Activated CD4-positive, alpha-beta memory T cell treated with anti-CD3 and anti-CD28 coated beads for 36 hours (primary cell): ENCODE measurements at regions of chr14 and their contacts with region 1.

Region 1: GRCh38 chr14:106044949-106045600 is 518.7 kb downstream of the TMEM121 start:
- DNase-seq: peak; percentile 92
- H3K4me3 Mint-ChIP-seq: no peak overlapping the region
- H3K27ac Mint-ChIP-seq: peak overlapping the region; percentile 57
- H3K4me1 Mint-ChIP-seq: peaks cover 12% of the 10 kb centered on the region
- H3K27me3 Mint-ChIP-seq: peaks cover 12% of the 10 kb centered on the region

Region 2: DNA sequence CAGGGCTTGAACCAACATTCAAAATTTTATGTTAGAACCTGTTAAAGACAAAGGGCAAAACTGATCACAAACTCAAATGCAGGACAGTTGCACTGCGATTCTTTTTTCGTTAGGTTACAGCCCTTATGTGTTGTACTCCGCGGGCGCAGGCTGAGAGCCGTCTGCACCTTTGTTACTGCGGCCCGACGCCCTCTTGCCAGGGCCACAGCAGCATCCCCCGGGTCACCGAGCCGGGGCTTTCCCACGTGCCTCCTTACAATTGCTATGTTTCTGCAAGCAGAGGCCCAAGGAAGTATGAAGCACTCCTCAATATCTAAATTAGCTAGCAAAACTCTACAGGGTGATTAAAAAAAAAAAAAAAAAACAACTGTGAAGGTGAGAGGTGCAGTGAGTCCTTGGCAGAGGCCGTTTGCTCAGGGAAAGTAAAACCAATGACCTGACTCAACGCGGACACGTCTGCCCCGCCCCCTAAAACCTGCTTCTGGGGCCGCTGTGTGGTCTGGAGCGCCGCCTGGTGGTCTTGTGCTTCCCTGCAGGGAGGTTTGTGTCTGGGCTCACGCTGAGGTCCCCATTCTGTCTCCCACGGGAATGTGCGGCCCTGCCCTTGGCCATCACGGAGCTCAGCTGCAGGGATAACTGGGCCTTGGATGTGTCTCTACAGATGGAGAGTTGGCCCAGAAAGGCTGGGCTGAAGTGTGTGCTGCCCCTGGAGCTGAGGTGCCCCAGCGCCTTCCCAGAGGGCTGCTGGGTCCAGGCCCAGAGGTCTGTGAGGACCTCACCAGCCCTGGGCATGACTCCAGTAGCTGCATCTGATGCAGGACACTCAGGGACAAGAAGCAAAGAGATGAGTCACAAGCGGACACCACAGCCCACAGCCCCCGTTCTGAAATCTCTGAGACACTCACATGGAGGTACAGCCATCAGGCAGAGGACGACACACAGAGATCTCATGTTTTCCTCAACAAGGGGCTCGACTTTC is 100.2 kb before region 1 on chr14:
- CTCF ChIA-PET with region 1: interaction called, 3 read pairs
- POLR2A ChIA-PET with region 1: no interaction called
- intact Hi-C with region 1: loop called (anchors 1 kb)
- DNase-seq: peak; percentile 91
- H3K4me3 Mint-ChIP-seq: no peak overlapping the region
- H3K27ac Mint-ChIP-seq: no peak overlapping the region
- H3K4me1 Mint-ChIP-seq: peaks cover 11% of the 10 kb centered on the region
- H3K27me3 Mint-ChIP-seq: peaks cover 4% of the 10 kb centered on the region

Region 3: GRCh38 chr14:106013879-106014376 is 31.1 kb before region 1 on chr14:
- CTCF ChIA-PET with region 1: interaction called, 18 read pairs
- POLR2A ChIA-PET with region 1: no interaction called
- intact Hi-C with region 1: loop called (anchors 1 kb)
- DNase-seq: peak; percentile 69
- H3K4me3 Mint-ChIP-seq: peak overlapping the region; percentile 72
- H3K27ac Mint-ChIP-seq: peak overlapping the region; percentile 97
- H3K4me1 Mint-ChIP-seq: peaks cover 77% of the 10 kb centered on the region
- H3K27me3 Mint-ChIP-seq: no peaks in the 10 kb centered on the region

Region 4: DNA sequence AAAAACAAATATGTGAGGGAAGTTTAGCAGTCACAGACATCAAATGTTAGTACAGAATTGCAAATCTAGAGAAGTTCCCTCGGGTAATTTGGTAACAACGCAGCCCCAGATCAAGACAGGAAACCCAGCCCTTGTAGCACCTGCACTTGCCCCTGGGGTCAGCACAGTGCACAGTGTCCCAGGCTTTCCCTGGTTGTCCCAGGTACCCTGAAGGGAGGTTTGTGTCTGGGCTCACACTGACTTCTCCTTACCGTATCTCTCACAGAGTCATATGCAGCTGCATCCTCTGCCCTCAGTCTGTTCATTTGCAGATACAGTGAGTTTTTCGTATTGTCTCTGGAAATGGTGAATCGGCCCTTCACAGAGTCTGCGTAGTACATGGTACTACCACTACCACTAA is 10.2 kb after region 1 on chr14:
- CTCF ChIA-PET with region 1: interaction called, 29 read pairs
- POLR2A ChIA-PET with region 1: no interaction called
- intact Hi-C with region 1: no loop called
- DNase-seq: no peak
- H3K4me3 Mint-ChIP-seq: no peak overlapping the region
- H3K27ac Mint-ChIP-seq: no peak overlapping the region
- H3K4me1 Mint-ChIP-seq: peaks cover 33% of the 10 kb centered on the region
- H3K27me3 Mint-ChIP-seq: peaks cover 20% of the 10 kb centered on the region

Region 5: DNA sequence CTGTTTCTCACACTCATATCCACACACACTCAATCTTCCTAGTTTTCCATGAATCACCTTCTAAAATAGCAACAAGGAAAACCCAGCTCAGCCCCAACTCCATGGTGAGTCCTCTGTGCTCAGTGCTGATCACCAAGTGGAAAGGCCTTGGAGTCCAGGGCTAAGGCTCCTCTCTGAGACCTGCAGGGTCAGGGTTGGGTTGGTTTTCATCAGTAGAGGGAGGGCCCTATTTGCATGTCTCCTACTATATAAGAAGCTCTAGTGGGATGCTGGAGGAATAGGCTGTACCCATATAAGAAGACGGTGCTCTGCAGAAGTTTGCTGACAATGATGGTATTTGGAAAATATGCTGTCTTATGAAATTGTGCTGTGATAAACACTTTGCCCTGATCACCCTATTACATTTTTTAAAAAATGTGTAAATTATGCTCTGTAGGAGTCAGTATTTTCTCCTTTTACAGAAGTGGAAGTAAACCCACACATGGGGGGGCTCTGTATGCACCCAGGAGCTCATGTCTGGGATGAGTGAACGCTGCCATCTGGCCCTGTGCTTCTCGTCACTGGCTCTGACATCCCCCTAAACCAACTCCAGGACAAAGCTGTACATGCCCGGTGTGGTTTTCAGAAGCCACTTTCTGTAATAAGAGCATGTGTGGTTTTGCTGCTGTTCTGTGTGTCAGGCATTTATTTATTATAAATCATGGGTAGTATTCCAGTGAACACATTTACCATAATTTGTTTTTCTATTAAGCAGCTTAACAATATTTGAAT is 17.6 kb after region 1 on chr14:
- CTCF ChIA-PET with region 1: interaction called, 29 read pairs
- POLR2A ChIA-PET with region 1: no interaction called
- intact Hi-C with region 1: loop called (anchors 2 kb)
- DNase-seq: no peak
- H3K4me3 Mint-ChIP-seq: no peak overlapping the region
- H3K27ac Mint-ChIP-seq: no peak overlapping the region
- H3K4me1 Mint-ChIP-seq: peaks cover 28% of the 10 kb centered on the region
- H3K27me3 Mint-ChIP-seq: peaks cover 44% of the 10 kb centered on the region

Region 6: GRCh38 chr14:106087837-106088236 is 42.8 kb after region 1 on chr14:
- CTCF ChIA-PET with region 1: no interaction called
- POLR2A ChIA-PET with region 1: no interaction called
- intact Hi-C with region 1: no loop called
- DNase-seq: no peak
- H3K4me3 Mint-ChIP-seq: no peak overlapping the region
- H3K27ac Mint-ChIP-seq: no peak overlapping the region
- H3K4me1 Mint-ChIP-seq: peaks cover 14% of the 10 kb centered on the region
- H3K27me3 Mint-ChIP-seq: peaks cover 2% of the 10 kb centered on the region